HepG2 (cell line): ENCODE measurements at regions of chr6 and their contacts with region 1.

Region 1: DNA sequence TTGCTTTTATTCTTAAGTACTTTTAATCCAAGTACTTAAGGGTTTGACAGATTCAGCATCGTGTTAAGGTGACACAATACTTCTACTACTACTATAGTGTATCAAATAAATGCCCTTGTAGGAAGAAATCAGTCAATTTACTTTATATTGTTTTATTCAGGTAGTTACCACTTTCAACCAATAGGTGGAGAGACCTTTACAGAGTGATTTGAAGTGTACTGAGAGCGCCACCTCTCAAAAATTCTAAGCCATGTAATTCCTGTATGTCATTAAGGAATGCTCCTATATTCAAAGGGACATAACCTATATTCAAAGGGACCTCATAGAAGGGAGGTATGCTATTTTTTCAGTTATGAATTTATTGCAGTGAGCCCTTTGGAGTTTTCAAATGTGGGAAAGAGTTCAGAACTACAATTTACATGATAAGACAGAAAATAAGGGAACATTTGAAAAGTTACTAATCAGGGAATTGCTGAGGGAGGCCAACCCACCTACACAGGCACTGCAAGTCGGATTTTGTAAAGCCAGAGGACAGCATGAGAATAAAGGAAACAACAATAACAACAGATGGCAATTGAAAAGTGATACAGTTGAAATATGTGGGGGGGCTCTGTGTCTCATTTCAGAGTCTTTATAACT is 955.6 kb downstream of the TBC1D32 start:
- DNase-seq: peak; percentile 72
- ATAC-seq: peak; percentile 97
- H3K4me3 ChIP-seq: no peak overlapping the region
- H3K27ac ChIP-seq: no peak overlapping the region
- H3K4me1 ChIP-seq: no peaks in the 10 kb centered on the region
- H3K27me3 ChIP-seq: no peaks in the 10 kb centered on the region
- CTCF ChIP-seq: peak; percentile 65
- EP300 ChIP-seq: no peak
- POLR2A ChIP-seq: no peak
- RAD21 ChIP-seq: peak; percentile 40; the same call in 1 of the 2 replicates

Region 2: DNA sequence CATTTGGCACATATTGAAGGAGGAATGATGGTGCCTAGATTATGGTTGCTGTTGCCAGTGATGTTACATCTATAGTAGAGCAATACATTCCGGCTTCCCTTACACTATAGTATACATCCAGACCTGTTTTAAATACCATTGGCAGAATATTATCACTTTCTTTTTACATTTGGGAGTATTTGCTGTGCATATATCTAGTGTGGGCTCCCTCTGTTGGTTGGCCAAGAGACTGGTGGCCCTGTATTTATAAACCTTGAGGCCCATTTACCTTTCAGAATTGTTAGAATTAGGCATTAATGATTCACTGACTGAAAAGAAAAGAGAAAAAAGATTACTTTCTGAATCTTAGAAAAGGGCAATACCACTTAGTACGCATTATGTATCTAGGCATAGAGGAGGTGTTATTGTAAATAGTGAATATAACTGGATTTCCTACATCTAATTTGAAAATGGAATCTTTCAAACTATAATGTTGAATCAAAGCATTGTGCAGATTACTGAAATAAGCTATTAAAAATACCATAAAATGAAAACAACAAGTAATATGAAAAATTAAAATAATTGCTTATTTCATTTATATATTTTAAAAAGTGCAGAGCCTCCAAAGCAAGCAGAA is 400.3 kb before region 1 on chr6:
- CTCF ChIA-PET with region 1: no interaction called
- POLR2A ChIA-PET with region 1: no interaction called
- in situ Hi-C with region 1: no loop called
- intact Hi-C with region 1: loop called (anchors 1 kb)
- DNase-seq: peak; percentile 15
- ATAC-seq: peak; percentile 83
- H3K4me3 ChIP-seq: no peak overlapping the region
- H3K27ac ChIP-seq: no peak overlapping the region
- H3K4me1 ChIP-seq: no peaks in the 10 kb centered on the region
- H3K27me3 ChIP-seq: no peaks in the 10 kb centered on the region
- CTCF ChIP-seq: peak; percentile 48
- EP300 ChIP-seq: no peak
- POLR2A ChIP-seq: no peak
- RAD21 ChIP-seq: no peak